ENCODE measurements at regions of chr6 and their contacts with region 1.

Region 1: DNA sequence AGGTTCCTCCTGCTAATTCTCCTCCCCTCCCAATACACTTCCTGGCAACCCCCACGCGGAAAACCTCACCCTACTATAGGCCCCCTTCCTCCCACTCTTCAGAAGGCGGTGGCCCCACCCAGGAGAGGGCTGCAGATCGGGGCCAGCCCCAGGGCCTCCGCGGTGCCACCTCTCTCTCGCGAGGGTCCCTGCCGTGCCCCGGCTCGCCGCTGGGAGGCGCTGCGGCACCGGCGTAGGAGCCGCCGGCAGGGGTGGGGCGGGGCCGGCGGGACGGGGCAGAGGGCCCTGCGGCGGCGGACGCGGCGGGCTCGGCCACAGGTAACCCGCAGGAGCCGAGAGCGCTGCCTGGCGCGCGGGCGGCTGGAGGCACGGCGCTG is at the start of gene ANKRD6:
- DNase-seq: peak; percentile 91
- CTCF ChIP-seq: peak; percentile 97

Region 2: DNA sequence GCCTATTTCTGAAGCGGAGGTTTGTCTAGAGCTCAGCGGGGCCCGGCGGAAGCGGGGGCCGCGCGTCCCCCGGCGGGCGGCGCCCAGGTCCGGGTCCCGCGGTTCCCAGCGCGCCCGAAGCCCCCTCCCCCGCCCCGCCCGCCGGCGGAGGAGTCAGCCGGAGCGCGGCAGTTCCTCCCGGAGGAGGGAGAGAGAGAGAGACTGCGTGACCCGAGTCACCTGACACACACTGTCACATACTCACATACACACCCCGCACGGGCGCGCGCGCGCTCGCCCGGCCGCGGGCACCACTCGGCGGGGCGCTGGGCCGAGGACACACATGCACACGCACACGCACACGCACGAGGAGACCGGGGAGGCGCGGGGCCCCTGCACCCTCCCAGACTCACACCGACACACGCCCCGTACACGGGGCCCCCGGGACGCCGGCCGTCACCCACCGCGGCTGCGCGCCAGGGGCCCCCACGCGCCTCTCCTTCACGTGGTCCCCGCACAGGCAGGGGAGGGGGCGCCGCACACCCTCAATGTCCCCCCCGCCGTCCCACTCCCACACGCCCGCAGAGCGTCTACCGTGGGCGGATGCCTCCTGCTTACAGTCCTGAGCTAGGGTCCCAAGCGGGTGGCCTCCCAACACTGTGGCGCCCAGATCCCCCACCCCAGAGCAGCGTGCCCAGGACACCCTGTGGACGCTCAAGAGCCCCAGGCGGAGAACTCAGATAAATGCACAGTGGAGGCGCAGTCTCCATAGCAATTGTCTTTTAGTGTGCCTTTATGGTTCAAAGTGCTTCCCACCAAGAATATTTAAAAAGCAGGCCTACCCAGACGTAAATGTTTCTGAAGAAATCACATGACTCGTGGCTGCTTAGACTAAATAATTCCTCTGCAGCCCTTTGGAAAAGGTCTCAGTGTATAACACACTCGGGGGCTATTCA is 20.5 kb before region 1 on chr6 and contains the start of gene RRAGD:
- CTCF ChIA-PET with region 1: interaction called, 26 read pairs
- POLR2A ChIA-PET with region 1: no interaction called
- DNase-seq: peak; percentile 82
- CTCF ChIP-seq: no peak

Region 3: GRCh38 chr6:89443658-89444057 is 10.8 kb after region 1 on chr6:
- CTCF ChIA-PET with region 1: interaction called, 12 read pairs
- POLR2A ChIA-PET with region 1: no interaction called
- DNase-seq: no peak
- CTCF ChIP-seq: no peak

Region 4: GRCh38 chr6:89452281-89452680 is 19.4 kb after region 1 on chr6:
- CTCF ChIA-PET with region 1: interaction called, 12 read pairs
- POLR2A ChIA-PET with region 1: no interaction called
- DNase-seq: no peak
- CTCF ChIP-seq: no peak

Region 5: GRCh38 chr6:89597988-89598692 is 165.3 kb after region 1 on chr6:
- CTCF ChIA-PET with region 1: interaction called, 16 read pairs
- POLR2A ChIA-PET with region 1: no interaction called
- DNase-seq: no peak
- CTCF ChIP-seq: peak; percentile 20

Region 6: GRCh38 chr6:89610149-89610642 is 177.3 kb after region 1 on chr6:
- CTCF ChIA-PET with region 1: interaction called, 68 read pairs
- POLR2A ChIA-PET with region 1: no interaction called
- DNase-seq: peak; percentile 71
- CTCF ChIP-seq: peak; percentile 88

Region 7: DNA sequence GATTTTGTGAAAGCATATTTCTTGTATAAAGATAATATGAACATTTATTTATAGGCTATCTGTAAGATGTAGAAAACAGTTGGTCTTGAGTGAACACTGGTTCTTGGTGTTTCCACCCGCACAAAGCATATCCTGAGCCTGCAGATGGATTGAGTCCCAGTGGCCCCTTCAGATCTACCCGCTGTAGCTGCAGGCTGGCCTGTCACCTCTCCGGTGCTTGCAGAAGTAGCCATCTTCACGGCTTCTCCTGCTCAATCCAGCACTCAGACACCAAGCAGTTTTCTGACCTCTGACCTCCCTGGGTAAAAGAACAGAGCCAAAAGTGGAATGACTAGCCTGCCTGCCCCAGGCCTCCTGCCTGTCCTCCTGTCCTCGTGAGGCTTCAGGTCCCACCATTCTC is 183.0 kb after region 1 on chr6:
- CTCF ChIA-PET with region 1: interaction called, 68 read pairs
- POLR2A ChIA-PET with region 1: no interaction called
- DNase-seq: no peak
- CTCF ChIP-seq: no peak

Measured in GM10248 (cell line).